Common myeloid progenitor, CD34-positive (primary cell): ENCODE measurements at regions of chr3 and their contacts with region 1.

Region 1: DNA sequence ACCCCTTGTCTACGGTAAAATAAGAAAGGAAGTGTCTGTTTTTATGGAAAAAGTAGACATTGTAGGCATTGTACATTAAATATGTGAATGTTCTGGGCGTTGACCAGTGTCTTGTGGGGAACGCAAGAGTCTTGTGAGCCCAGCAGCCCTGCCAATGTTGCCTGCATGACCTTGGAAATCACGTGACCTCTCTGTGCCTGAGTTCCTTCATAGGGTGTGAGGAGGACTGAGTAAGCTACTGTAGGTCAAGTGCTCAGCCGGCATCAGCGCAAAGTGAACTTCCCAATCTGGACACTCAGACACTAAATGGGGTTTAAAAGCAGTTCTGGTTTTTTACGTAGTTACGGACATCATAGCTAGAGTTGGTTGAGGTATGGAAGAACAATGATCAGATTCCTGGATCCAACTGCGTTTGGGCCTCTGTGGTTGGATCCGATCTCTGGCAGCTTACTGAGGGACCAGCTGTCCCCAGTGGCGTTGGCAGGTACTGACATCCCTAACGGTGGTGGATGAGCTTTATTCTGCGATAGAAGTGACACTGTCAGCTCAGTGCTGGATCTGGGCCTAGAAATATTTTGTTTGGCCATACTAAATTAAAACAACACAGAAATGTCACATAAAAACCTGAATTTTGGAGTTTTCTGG is 63.8 kb downstream of the SPSB4 start:
- DNase-seq: no peak
- H3K4me3 ChIP-seq: no peak overlapping the region
- H3K27ac ChIP-seq: no peak overlapping the region
- H3K4me1 ChIP-seq: peaks cover 0 to 6% (median 2%) of the 10 kb centered on the region in 4 experiments
- H3K27me3 ChIP-seq: no peaks in the 10 kb centered on the region

Region 2: DNA sequence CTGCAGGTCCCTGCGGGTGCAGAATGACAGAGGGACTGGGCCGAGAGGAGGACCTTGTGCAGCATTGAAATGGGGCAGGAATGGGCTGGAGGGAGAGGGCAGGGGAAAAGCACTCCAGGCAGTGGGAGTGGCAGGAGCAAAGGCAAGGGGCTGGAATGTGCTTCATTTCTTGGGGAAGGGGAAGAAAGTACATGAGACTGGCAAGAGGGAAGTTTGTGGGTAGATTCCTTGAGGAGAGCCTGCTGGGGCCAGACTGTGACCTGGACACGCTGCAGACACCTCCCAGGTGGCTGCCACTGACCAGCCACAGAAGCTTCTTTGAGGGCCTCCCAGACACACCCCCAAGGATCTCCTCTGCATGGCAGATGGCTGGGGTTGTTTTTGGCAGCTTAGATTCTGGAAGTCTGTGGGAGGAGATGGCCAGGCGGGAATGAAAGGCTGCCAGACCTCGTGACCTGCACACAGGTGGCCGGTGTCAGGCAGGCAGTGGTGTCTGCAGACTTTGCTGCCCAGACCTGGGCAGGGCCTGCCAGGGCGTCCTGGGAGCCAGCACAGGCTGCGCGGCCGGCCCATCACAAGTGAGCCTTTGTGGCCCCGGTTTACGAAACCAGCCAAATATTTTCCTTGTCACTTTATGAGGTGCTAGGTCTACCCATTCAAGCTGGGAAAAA is 10.7 kb before region 1 on chr3:
- CTCF ChIA-PET with region 1: interaction called, 13 read pairs
- POLR2A ChIA-PET with region 1: no interaction called
- DNase-seq: no peak
- H3K4me3 ChIP-seq: no peak overlapping the region
- H3K27ac ChIP-seq: no peak overlapping the region
- H3K4me1 ChIP-seq: no peaks in the 10 kb centered on the region
- H3K27me3 ChIP-seq: no peaks in the 10 kb centered on the region